ENCODE measurements at regions of chr17 and their contacts with region 1.

Region 1: GRCh38 chr17:76557368-76558197 is 17.7 kb downstream of the PRCD start:
- DNase-seq: peak; percentile 95

Region 2: GRCh38 chr17:76481071-76481655 is 76.4 kb before region 1 on chr17:
- CTCF ChIA-PET with region 1: no interaction called
- POLR2A ChIA-PET with region 1: no interaction called
- DNase-seq: no peak

Region 3: DNA sequence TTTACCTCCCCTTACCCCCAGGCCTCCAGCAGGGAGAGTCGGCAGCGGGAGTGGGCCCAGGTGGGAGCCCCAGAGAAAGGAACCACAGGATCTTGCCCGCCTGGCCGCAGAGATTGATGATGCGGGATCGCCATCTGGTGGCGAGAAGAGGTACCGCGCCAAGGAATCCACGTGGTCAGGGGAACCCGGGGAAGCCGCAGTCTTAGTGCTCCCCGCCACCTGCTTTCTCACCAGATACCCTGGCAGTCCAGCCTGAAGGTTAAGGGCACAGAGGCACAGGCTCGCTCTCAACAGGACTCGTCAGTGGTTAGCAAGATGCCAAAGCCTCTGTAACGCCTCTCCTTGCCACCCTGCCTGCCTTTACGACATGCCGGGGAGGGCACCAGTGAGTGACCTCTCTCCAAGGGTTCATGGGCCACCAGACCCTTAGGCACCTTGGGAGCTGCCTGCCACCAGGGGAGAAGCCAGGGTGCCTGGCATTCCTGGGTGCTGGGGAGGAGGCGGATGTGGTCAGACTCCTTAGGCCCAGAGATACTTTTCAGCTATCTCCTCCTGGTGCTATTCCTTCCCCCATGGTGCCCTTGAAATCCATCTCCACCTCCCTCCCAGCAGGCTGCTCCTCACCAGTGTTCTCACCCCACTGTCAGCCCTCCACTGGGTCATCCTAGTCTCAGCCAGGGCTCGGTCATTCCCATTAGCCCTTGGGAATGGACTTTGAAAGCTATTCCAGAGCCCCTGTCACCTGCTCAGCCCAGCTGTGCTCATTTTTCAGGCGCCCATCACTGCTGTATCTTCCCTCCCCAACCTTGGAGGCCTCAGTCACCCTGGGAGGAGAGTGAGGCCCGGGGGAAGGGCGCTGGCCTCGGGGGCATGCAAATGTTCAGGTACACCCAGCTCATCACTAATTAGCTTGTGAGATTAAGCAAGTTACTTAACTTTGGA is 50.9 kb before region 1 on chr17:
- CTCF ChIA-PET with region 1: interaction called, 3 read pairs
- POLR2A ChIA-PET with region 1: interaction called, 13 read pairs
- DNase-seq: peak; percentile 91

Region 4: GRCh38 chr17:76540381-76541300 is 16.9 kb before region 1 on chr17:
- CTCF ChIA-PET with region 1: interaction called, 3 read pairs
- POLR2A ChIA-PET with region 1: interaction called, 17 read pairs
- DNase-seq: peak; percentile 97

Region 5: DNA sequence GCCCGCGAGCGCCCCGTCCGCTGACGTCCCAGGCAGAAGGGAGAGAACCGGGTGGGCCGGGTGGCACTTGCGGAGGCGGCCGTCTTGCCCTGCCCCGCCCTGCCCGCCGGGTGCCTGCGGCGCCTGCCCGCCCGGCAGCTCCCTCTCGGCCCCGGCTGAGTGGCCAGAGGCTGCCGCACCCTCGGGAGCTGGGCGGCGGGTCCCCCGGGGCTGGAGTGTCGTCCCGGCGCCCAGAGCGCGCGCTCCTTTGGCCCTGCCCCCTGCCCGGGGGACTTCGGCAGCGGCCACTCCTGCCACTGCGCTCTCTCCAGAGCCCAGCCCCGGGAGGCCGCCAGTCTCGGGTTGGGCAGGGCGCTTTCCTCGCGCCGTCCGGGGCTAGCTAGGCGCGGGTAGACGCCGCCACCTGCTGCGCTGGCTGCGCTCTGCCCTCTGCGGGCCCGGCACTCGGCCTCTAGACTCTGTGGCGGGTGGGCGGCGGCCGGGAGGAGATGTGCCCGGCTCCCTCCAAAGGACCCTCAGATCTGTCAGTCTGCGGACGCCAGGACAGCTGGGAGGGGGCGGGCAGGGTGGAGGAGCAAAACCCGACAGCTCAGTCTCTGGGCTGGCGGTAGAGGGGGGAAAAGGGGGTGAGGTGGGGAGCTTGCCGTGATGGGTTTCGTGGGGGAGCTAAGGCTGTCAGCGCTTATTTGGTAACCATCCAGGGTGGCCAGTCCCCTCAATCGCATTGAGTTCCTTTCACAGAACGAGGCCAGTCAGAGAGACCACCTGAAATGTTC is 28.4 kb after region 1 on chr17 and contains the start of gene ST6GALNAC2:
- CTCF ChIA-PET with region 1: interaction called, 5 read pairs
- POLR2A ChIA-PET with region 1: interaction called, 20 read pairs
- DNase-seq: peak; percentile 66

Region 6: DNA sequence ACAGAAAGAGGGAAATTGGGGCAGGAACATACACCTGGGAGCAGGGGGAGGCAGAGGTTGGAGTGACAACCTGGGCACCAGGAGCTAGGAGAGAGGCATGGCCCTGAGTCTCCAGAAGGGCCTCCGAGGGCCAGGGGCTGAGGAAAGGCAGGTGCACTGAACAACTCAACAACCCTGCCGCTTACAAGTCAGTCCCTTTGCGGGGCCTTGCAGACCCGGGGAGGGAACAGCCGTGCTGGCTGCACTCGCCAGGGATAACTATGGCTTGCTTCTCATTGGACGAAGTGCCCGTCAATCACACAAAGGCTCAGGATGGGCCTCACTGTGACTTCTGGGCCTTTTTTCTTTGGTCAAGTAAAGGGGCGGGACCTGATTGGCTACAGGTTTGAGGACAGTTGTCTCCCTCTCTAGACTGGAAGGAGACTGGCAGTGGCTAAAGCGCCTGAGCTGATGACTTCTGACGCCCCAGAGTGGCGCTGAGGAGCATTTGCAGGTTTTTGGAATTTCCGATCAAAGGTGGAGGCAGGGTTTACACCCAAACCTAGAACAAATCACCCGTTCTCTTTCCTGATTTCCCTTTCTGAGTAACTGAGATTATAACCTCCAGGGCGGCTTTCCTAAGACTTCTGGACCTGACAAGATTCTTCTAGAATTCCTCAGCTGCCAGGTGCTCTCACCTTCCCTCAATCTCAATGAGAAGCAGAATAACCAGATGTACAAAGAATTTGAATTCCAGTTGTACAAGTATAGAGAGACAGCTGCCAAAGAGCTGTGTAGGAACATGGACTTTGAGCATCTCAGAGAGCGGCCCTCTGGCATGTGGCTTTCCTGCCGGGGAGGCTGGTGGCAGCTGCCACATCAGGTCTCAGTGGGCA is 55.6 kb after region 1 on chr17:
- CTCF ChIA-PET with region 1: interaction called, 3 read pairs
- POLR2A ChIA-PET with region 1: interaction called, 16 read pairs
- DNase-seq: peak; percentile 91

Region 7: DNA sequence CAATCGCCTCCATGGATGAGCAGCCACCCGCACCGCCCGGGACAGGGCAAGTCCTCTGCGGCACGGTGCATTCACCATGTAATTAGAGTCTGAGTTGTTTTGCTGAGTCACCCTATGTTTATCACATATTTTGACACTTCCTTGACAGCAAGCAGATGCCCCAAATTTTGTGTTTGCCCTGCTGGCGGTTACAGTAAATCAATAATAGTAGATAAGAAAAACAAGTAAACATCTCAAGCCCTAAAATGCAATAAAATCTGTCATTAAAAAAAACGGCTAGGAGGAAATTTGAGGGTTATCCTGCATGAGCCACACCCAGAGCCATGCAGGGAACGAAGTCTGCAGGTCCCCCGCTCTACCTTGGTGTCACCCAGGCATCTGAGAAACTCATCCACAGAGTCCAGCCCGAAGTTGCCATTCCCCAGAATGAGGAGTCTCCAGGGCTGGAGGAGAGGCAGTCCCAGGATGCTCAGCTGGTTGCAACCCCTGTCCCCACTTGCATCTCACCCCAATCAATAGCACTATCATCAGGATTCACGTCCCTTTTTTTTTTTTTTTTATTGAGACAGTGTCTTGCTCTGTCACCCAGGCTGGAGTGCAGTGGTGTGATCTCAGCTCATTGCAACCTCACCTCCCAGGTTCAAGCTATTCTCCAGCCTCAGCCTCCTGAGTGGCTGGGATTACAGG is 102.5 kb after region 1 on chr17:
- CTCF ChIA-PET with region 1: no interaction called
- POLR2A ChIA-PET with region 1: interaction called, 11 read pairs
- DNase-seq: no peak

Region 8: DNA sequence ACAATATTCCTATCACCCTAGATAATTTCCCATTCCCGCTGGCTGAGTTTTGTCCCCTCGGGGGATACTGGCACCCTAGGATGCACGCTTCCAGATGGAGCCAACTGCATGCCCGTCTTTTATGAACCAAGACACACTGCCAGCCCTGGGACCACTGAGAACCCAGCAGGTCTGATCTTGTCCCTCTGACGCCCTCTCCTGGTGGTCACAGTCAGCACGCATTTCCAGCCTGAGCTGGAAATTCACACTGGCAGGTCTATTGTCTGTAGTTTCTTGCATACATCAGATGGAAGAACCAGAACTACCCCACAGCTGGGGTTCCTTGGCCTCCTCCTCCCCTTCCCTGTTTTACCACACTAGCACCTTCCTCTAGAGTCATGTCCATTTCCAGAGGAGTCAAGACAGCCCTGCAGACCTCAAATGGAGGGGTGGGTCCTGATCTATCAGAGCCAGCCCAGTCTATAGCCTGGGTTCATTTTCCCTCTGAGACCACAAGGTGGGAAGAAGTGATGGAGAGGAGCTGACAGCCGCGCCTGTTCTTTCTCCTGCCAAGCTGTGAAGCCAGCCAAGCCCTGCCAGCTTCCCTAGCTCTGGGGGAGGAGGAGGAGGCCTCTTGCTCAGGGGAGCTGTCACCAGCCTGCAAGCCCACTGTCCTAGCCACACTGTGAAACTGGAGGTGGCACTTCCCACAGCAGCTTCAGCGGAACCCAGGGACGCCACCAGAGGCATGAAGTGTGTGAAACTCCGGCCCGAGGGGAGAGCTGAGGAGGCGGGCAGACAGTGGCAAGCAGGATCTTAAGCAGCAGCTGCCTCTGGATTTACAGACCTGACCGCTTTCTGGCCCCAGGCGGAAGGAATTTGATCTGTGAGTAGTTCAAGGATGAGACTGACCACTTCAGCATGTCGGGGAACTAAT is 123.9 kb after region 1 on chr17:
- CTCF ChIA-PET with region 1: interaction called, 9 read pairs
- POLR2A ChIA-PET with region 1: interaction called, 21 read pairs
- DNase-seq: peak; percentile 78

Measured in HEK293T (cell line).